ENCODE measurements at regions of chr9 and their contacts with region 1.

Region 1: GRCh38 chr9:35732122-35732799 is at the starts of genes CREB3 and TLN1:
- DNase-seq: peak; percentile 96
- H3K4me3 ChIP-seq: peak within 1 kb of the TSS; percentile 87
- CTCF ChIP-seq: peak; percentile 44

Region 2: GRCh38 chr9:35657546-35658136 is 74.6 kb before region 1 on chr9 and contains the start of gene RMRP:
- CTCF ChIA-PET with region 1: interaction called, 74 read pairs
- POLR2A ChIA-PET with region 1: interaction called, 14 read pairs
- DNase-seq: peak; percentile 99
- H3K4me3 ChIP-seq: peak within 1 kb of the TSS; percentile 97
- CTCF ChIP-seq: peak; percentile 42

Region 3: DNA sequence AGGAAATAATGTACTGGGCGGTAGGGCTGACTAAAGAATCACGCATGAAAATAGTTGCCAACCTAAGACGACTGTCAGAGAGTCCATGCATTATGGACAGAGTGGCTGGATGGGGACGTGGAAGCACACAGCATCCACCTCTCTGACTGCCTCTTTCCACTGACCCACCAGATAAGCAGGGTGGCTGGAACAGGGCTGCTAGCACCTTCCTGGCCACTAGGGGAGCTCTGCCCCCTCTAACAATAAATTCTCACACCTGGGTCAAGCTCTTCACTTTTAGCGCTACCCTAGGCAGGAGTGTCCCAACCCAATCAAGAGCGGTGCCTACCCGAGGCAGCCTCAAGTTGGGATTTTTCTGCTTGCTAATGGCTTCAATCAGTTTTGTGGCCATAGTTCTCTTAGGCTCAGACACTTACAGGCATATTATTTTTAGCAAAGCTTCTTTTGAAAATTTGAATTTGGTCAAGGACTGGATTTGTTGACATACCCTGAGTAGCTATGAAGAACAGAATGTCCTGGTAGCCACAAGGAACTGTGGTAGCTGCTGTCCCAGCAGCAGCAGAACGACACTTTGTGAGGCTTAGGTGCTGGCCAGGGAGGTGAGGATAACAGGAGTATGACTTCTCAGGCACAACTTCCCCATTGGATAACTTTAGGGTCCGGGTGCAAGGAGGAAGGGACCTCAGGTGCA is 35.6 kb before region 1 on chr9:
- CTCF ChIA-PET with region 1: interaction called, 816 read pairs
- POLR2A ChIA-PET with region 1: interaction called, 325 read pairs
- DNase-seq: no peak
- H3K4me3 ChIP-seq: no peak overlapping the region
- CTCF ChIP-seq: peak; percentile 78

Region 4: DNA sequence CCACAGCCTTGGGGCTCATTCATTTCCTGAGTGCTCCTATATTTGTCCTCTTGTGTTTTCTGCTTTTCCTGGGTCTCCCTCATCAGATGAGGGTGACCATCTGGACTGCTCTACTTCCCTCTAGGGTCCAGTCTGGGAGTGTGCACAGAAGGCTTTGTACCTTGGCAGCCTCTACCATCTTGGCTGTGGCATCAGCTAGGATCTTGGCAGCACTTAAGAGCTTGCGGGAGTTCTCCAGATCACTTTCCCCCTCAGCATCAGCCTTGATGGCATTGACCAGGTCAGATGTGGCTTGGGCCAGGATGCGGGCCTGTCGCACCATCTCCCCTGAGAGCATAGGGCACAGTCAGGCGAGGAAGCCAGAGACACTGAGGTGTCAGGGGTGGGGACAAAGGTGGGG is 16.0 kb before region 1 on chr9:
- CTCF ChIA-PET with region 1: interaction called, 816 read pairs
- POLR2A ChIA-PET with region 1: interaction called, 36 read pairs
- DNase-seq: no peak
- H3K4me3 ChIP-seq: no peak overlapping the region
- CTCF ChIP-seq: no peak

Measured in AG04449 (cell line).